Activated CD4-positive, alpha-beta memory T cell treated with anti-CD3 and anti-CD28 coated beads for 36 hours (primary cell): ENCODE measurements at regions of chr2 and their contacts with region 1.

Region 1: DNA sequence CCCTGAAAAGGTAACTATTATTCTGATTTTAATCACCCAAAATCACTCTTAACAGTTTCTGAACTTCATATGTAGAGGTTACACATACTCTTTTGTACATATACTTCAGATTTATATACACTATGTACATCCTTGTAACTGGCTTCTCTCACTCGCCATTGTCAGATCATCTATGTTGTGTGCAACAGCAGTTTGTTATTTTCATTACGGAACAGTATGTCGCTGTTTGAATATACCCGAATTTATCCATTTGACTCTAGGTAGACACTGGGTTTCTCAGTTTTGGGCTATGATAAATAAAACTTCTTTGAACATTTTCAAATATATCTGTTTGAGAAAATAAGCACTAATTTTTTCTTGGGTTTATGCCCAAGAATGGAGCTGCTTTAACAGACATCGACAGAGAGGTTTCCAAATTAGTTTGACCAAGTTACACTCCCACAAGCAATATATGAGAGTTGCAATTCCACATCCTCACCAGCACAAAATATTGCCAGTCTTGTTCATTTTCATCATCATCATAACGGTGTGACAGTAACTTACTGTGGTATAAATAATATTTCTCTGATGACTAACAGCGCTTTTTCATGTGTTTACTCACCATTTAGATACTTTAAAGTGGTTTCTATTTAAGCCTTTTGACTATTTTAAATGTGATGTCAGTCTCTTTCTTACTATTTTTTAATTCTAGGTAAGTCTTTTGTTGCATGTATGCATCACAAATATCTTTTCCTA is 80.9 kb downstream of the SMC6 start:
- DNase-seq: no peak
- H3K4me3 Mint-ChIP-seq: no peak overlapping the region
- H3K27ac Mint-ChIP-seq: no peak overlapping the region
- H3K4me1 Mint-ChIP-seq: peaks cover 14% of the 10 kb centered on the region
- H3K27me3 Mint-ChIP-seq: no peaks in the 10 kb centered on the region

Region 2: GRCh38 chr2:17658251-17658843 is 14.4 kb before region 1 on chr2:
- CTCF ChIA-PET with region 1: interaction called, 85 read pairs
- POLR2A ChIA-PET with region 1: no interaction called
- intact Hi-C with region 1: loop called (anchors 1 kb)
- DNase-seq: peak; percentile 42
- H3K4me3 Mint-ChIP-seq: no peak overlapping the region
- H3K27ac Mint-ChIP-seq: peak overlapping the region; percentile 40
- H3K4me1 Mint-ChIP-seq: peaks cover 13% of the 10 kb centered on the region
- H3K27me3 Mint-ChIP-seq: no peaks in the 10 kb centered on the region